HCT116 (cell line): ENCODE measurements at regions of chr4 and their contacts with region 1.

Region 1: GRCh38 chr4:8267077-8267476 is 2.5 kb upstream of the HTRA3 start:
- DNase-seq: peak; percentile 35
- ATAC-seq: peak; percentile 97
- H3K4me3 ChIP-seq: no peak overlapping the region
- H3K27ac ChIP-seq: no peak overlapping the region
- H3K4me1 ChIP-seq: no peaks in the 10 kb centered on the region
- H3K27me3 ChIP-seq: no peaks in the 10 kb centered on the region
- CTCF ChIP-seq: peak; percentile 79 to 93 (median 82)
- POLR2A ChIP-seq: no peak
- RAD21 ChIP-seq: peak; percentile 88

Region 2: GRCh38 chr4:8403173-8403753 is 136.2 kb after region 1 on chr4:
- CTCF ChIA-PET with region 1: interaction called, 34 read pairs
- POLR2A ChIA-PET with region 1: no interaction called
- RAD21 ChIA-PET with region 1: interaction called in 1 of 2 experiments, 7 read pairs
- intact Hi-C with region 1: loop called (anchors 1 kb)
- DNase-seq: peak; percentile 23
- ATAC-seq: peak; percentile 93
- H3K4me3 ChIP-seq: no peak overlapping the region
- H3K27ac ChIP-seq: no peak overlapping the region
- H3K4me1 ChIP-seq: no peaks in the 10 kb centered on the region
- H3K27me3 ChIP-seq: no peaks in the 10 kb centered on the region
- CTCF ChIP-seq: peak; percentile 86 to 94 (median 91)
- POLR2A ChIP-seq: no peak
- RAD21 ChIP-seq: peak; percentile 91

Region 3: DNA sequence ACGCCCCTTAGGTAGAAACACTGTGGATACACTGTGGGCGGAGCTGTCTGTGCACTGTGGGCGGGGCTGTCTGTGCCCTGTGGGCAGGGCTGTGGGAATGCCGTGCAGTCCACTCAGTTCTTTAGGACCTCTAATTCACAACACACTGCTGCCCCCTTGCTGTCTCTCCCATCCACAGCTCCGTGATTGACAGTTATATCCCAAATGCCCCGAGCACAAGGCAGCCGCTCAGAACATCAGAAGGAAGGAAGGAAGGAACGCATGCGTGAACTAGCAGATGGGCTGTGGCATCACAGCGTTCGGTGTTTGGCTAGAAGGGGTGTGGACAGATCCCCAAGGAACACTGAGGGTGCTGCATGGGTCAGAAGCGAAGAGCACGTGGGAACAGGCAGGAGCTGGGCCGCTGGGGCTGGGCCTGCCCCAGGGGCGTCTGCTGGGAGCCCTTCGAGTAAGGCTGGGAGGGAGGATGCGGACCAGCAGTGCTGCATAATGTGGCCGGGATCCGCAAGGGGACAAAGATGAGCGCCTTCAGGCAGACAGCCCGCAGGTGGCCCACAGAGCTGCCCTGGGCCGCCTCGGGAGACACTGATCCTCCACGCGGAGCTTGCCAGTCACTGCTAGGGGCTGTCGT is 143.7 kb after region 1 on chr4:
- CTCF ChIA-PET with region 1: interaction called, 20 read pairs
- POLR2A ChIA-PET with region 1: no interaction called
- RAD21 ChIA-PET with region 1: interaction called in 1 of 2 experiments, 3 read pairs
- intact Hi-C with region 1: no loop called
- DNase-seq: peak; percentile 81
- ATAC-seq: peak; percentile 94
- H3K4me3 ChIP-seq: no peak overlapping the region
- H3K27ac ChIP-seq: no peak overlapping the region
- H3K4me1 ChIP-seq: peaks cover 12 to 15% of the 10 kb centered on the region in 2 experiments; a peak in 3 of 4 replicates
- H3K27me3 ChIP-seq: no peaks in the 10 kb centered on the region
- CTCF ChIP-seq: peak; percentile 61 to 67 (median 66)
- POLR2A ChIP-seq: no peak
- RAD21 ChIP-seq: peak; percentile 76

Region 4: DNA sequence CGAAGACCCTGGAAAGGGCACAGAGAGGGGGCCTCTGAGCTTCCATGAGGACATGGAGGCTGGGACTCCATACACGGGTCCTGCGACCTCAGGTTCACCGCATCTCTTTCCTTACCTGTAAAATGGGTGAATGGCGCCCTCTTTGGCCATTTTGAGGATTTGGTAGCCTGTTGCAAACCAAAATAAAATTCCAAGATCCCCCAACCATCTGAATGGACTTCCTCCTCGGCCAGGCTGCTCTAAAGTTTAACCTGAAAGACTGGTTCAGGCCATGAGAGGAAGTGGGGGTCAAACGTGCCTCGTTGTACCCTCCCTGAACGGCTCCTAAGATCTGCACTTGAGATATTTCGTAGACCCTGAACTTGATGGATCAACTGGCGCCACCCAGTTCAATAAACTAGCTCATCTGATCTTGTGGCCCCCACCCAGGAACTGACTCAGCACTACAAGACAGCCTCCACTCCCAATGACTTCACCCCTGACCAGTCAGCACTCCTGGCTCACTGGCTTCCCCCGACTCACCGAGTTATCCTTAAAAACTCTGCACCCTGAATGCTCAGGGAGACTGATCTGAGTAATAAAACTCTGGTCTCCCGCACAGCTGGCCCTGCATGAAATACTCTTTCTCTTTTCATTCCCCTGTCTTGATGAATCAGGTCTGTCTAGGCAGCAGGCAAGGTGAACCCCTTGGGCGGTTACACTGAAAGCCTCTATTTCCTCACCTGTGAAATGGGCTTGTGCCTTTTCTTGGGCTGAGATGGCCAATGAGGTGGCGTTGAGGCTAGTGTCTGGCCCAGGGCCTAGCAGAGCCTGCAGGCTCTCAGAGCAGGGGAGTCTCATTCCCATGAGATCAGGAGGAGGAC is 280.3 kb after region 1 on chr4:
- CTCF ChIA-PET with region 1: no interaction called
- POLR2A ChIA-PET with region 1: no interaction called
- RAD21 ChIA-PET with region 1: no interaction called
- intact Hi-C with region 1: loop called (anchors 1 kb)
- DNase-seq: peak; percentile 56
- ATAC-seq: peak; percentile 81
- H3K4me3 ChIP-seq: no peak overlapping the region
- H3K27ac ChIP-seq: no peak overlapping the region
- H3K4me1 ChIP-seq: peaks cover 0 to 21% of the 10 kb centered on the region in 2 experiments; a peak in 3 of 4 replicates
- H3K27me3 ChIP-seq: 0 out of 2 replicates have a peak, but pooled peaks cover 2% of the 10 kb centered on the region
- CTCF ChIP-seq: peak in 2 of 3 experiments; percentile 70 to 77; a peak in 4 of 6 replicates
- POLR2A ChIP-seq: no peak
- RAD21 ChIP-seq: no peak

Region 5: DNA sequence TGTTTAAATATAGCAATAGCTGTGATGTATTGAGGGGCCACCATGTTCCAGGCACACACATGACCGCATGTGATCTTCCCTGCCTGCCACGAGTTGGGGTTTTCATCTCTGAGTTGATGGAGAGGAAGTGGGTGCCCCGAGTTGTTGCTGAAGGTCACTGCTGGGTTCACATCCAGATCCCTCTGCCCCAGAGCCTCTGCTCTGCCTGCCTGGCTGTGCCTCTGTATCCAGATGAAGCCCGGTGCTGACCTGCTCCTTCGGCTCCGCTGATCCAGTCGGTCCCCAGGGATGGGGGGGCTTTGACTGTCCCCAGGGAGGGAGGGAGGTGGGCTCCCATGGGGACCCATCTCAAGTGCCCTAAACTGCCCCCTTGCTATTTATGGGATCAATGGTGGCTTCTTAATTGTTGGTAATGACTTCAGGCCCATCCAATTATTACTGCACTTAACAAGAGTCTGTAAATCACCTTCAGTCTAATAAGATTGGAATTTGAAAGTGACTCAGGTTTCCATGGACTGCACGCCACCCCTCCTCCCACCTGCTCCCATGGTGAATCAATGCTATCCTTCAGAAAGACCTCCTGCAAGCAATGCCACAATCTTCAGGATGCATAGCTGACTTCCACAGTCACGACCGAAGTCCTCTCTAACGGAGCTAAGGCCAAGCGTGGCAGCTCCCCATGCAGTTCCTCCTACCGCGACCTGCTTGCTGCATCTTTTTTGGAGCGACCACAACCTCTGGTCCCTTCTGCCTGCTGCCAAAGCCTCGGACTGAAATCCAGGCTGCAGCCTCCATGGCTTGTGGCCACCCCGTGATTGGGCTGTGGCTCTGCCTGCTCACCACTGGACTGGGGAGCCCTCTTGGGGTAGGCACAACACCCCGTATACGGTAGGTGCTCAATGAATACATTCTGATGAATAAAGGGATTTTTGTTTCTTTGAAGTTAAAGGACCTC is 398.6 kb after region 1 on chr4:
- CTCF ChIA-PET with region 1: no interaction called
- POLR2A ChIA-PET with region 1: no interaction called
- RAD21 ChIA-PET with region 1: no interaction called
- intact Hi-C with region 1: no loop called
- DNase-seq: no peak
- ATAC-seq: no peak
- H3K4me3 ChIP-seq: no peak overlapping the region
- H3K27ac ChIP-seq: no peak overlapping the region
- H3K4me1 ChIP-seq: peaks cover 0 to 8% of the 10 kb centered on the region in 2 experiments; a peak in 1 of 4 replicates
- H3K27me3 ChIP-seq: peaks cover 31% of the 10 kb centered on the region
- CTCF ChIP-seq: no peak
- POLR2A ChIP-seq: no peak
- RAD21 ChIP-seq: no peak